Sigmoid colon (tissue), 7 donors: ENCODE measurements at regions of chr4 and their contacts with region 1.

Region 1: DNA sequence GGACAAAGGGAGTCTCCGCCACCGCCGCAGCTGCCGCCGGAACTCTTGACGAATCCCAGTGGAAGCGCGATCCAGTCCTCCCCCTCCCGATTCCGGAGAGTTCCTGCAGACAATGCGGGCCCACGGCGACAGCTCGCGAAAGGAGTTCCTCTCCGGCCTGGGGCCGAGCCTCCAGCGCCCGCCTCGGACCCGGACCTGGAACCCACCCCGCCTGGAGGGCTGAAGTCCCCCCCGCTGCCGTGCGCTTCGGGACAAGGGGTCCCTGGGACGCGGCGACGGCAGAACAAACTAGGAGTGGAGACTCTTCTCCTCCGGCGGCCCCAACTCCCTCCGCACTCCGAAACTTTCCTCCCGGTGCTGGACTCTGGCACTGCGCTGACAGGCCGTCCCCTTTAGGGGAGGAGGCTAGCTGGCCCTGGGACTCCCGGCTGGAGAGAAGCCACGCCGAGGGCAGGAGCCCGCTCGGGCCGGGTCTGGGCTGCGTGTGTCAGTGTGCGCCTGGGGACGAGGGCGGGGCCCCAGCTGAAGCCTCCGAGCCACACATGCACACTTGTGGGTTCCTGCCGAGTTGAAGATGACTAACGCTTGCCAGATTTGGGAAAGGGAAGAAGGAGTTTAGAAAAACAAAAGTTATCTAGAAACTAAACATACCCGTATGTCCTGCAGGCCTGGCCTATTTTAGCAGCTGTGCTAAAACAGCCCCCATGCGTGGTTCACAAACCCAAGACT is at the start of gene ANTXR2:
- DNase-seq: peak; percentile 96
- H3K4me3 ChIP-seq: peak within 1 kb of the TSS; percentile 76 to 95 (median 87)
- H3K27ac ChIP-seq: peak within 1 kb of the TSS; percentile 94 to 97 (median 95)
- H3K4me1 ChIP-seq: peaks cover 0 to 50% (median 39%) of the 10 kb centered on the region in 4 donors
- H3K27me3 ChIP-seq: no peaks in the 10 kb centered on the region
- CTCF ChIP-seq: peak in 1 of 4 experiments; percentile 11
- EP300 ChIP-seq: peak in 2 of 4 donors; percentile 0 to 28
- POLR2A ChIP-seq: peak; percentile 57 to 73
- total RNA-seq, gene ANTXR2: 170 to 237 (median 212) TPM

Region 2: GRCh38 chr4:79049840-79050540 is 1022.9 kb before region 1 on chr4:
- intact Hi-C with region 1: loop called (anchors 5 kb)
- DNase-seq: peak; percentile 81
- H3K4me3 ChIP-seq: peak overlapping the region in 3 of 4 donors; percentile 23 to 37 (median 28)
- H3K27ac ChIP-seq: peak overlapping the region in 3 of 4 donors; percentile 73 to 80 (median 76)
- H3K4me1 ChIP-seq: peaks cover 0 to 74% (median 55%) of the 10 kb centered on the region in 4 donors
- H3K27me3 ChIP-seq: no peaks in the 10 kb centered on the region
- CTCF ChIP-seq: no peak
- EP300 ChIP-seq: no peak
- POLR2A ChIP-seq: no peak

Region 3: DNA sequence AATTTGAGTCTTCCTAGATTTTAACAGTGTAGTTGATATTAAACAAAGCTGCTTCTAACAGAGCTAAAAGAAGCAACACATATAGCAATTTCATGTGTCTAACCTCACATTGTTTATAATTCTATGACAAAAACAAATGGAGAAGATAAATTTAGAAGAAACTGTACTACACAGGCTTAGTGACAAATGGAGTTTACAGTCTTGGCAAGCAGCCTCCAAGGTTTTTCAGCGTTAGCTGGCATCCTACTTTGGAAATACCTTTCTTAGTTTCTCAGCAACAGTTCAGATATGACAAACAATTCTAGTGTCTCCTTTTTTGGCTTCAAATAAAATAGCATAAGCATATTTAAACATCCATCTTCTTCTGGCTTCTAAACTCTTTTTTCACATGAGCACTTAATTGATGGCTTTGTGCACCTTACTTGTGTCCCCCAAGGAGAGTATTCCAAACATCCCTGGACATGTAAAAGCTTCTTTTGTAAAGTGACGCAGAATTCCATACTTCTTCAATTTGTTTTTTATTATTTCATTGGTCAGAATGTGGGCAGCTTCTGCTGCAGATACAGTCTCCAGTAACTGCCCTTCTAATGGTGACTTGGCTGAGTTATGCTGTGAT is 249.7 kb before region 1 on chr4:
- intact Hi-C with region 1: loop called (anchors 5 kb)
- DNase-seq: peak; percentile 89
- H3K4me3 ChIP-seq: no peak overlapping the region
- H3K27ac ChIP-seq: peak overlapping the region; percentile 71 to 83 (median 80)
- H3K4me1 ChIP-seq: peaks cover 0 to 24% (median 19%) of the 10 kb centered on the region in 4 donors
- H3K27me3 ChIP-seq: no peaks in the 10 kb centered on the region
- CTCF ChIP-seq: no peak
- EP300 ChIP-seq: peak; percentile 46 to 90 (median 59)
- POLR2A ChIP-seq: no peak

Region 4: GRCh38 chr4:79906303-79906702 is 166.6 kb before region 1 on chr4:
- intact Hi-C with region 1: no loop called
- DNase-seq: no peak
- H3K4me3 ChIP-seq: no peak overlapping the region
- H3K27ac ChIP-seq: no peak overlapping the region
- H3K4me1 ChIP-seq: peaks cover 0 to 16% (median 0%) of the 10 kb centered on the region in 4 donors
- H3K27me3 ChIP-seq: no peaks in the 10 kb centered on the region
- CTCF ChIP-seq: no peak
- EP300 ChIP-seq: no peak
- POLR2A ChIP-seq: no peak

Region 5: GRCh38 chr4:80017125-80017854 is 55.6 kb before region 1 on chr4:
- intact Hi-C with region 1: loop called (anchors 5 kb)
- DNase-seq: no peak
- H3K4me3 ChIP-seq: no peak overlapping the region
- H3K27ac ChIP-seq: peak overlapping the region in 3 of 4 donors; percentile 26 to 62 (median 52)
- H3K4me1 ChIP-seq: peaks cover 0 to 44% (median 38%) of the 10 kb centered on the region in 4 donors
- H3K27me3 ChIP-seq: no peaks in the 10 kb centered on the region
- CTCF ChIP-seq: no peak
- EP300 ChIP-seq: no peak
- POLR2A ChIP-seq: no peak

Region 6: GRCh38 chr4:80112236-80112635 is 39.3 kb after region 1 on chr4:
- intact Hi-C with region 1: no loop called
- DNase-seq: peak; percentile 72
- H3K4me3 ChIP-seq: no peak overlapping the region
- H3K27ac ChIP-seq: peak overlapping the region in 1 of 4 donors; percentile 47
- H3K4me1 ChIP-seq: no peaks in the 10 kb centered on the region
- H3K27me3 ChIP-seq: no peaks in the 10 kb centered on the region
- CTCF ChIP-seq: no peak
- EP300 ChIP-seq: no peak
- POLR2A ChIP-seq: no peak

Region 7: GRCh38 chr4:80202190-80202711 is 129.3 kb after region 1 on chr4:
- intact Hi-C with region 1: loop called (anchors 5 kb)
- DNase-seq: peak; percentile 95
- H3K4me3 ChIP-seq: peak overlapping the region; percentile 51 to 78 (median 72)
- H3K27ac ChIP-seq: peak overlapping the region; percentile 94 to 97 (median 94)
- H3K4me1 ChIP-seq: peaks cover 0 to 22% (median 13%) of the 10 kb centered on the region in 4 donors
- H3K27me3 ChIP-seq: no peaks in the 10 kb centered on the region
- CTCF ChIP-seq: peak; percentile 69 to 92 (median 87)
- EP300 ChIP-seq: no peak
- POLR2A ChIP-seq: peak in 1 of 2 donors; percentile 15